Breast epithelium (tissue), 4 donors: ENCODE measurements at regions of chr22 and their contacts with region 1.

Region 1: GRCh38 chr22:40856513-40857308 is at the starts of genes ST13 and XPNPEP3:
- DNase-seq: peak; percentile 97 to 98
- H3K4me3 ChIP-seq: peak within 1 kb of the TSS; percentile 88 to 95 (median 94)
- H3K27ac ChIP-seq: peak within 1 kb of the TSS; percentile 98
- H3K4me1 ChIP-seq: peaks cover 0 to 13% of the 10 kb centered on the region in 2 donors
- H3K27me3 ChIP-seq: no peaks in the 10 kb centered on the region
- CTCF ChIP-seq: no peak
- POLR2A ChIP-seq: peak; percentile 40
- total RNA-seq, gene ST13: 162 to 248 (median 190) TPM
- total RNA-seq, gene XPNPEP3: 11.5 to 13.8 (median 12.0) TPM

Region 2: GRCh38 chr22:40838486-40838885 is 18.2 kb before region 1 on chr22:
- intact Hi-C with region 1: no loop called
- DNase-seq: no peak
- H3K4me3 ChIP-seq: no peak overlapping the region
- H3K27ac ChIP-seq: no peak overlapping the region
- H3K4me1 ChIP-seq: no peaks in the 10 kb centered on the region
- H3K27me3 ChIP-seq: no peaks in the 10 kb centered on the region
- CTCF ChIP-seq: no peak
- POLR2A ChIP-seq: no peak

Region 3: DNA sequence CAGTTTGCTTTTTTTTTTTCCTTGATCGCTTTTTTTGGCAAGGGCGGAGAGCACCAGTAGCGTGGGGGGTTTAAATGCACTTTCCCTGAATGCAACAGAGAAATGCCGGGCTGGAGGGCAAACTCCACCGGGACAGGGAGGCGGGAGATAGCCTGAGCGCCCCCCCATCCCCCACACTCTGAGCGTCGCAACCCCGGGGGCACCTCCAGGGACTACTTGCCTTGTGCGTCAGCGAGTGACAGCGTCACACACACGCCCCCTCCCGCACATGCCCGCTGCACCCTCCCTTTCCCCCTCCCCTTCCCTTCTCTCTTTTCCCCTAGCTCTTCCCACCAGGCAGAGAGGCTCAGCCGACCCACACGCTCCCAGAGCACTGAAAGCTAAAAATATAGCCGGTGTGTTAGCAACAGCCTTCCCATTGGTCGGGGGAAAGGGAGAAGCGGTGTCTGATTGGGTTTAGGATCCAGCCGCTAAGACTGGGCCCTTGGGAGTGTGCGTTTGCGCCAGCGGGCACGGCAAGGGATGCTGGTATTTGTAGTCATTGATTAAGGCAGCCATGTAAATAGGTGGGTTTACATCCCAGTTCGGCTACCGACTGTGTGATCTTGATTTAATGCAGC is 591.6 kb after region 1 on chr22:
- intact Hi-C with region 1: loop called (anchors 10 kb)
- DNase-seq: peak; percentile 93 to 97
- H3K4me3 ChIP-seq: peak overlapping the region; percentile 69 to 100 (median 93)
- H3K27ac ChIP-seq: peak overlapping the region; percentile 97 to 100
- H3K4me1 ChIP-seq: no peaks in the 10 kb centered on the region
- H3K27me3 ChIP-seq: no peaks in the 10 kb centered on the region
- CTCF ChIP-seq: no peak
- POLR2A ChIP-seq: peak; percentile 81